HEK293 (cell line): ENCODE measurements at regions of chr1 and their contacts with region 1.

Region 1: GRCh38 chr1:112803906-112804762 is 89.0 kb upstream of the PPM1J start:
- H3K4me3 ChIP-seq: no peak overlapping the region
- H3K27ac ChIP-seq: no peak overlapping the region
- H3K4me1 ChIP-seq: no peaks in the 10 kb centered on the region
- CTCF ChIP-seq: peak; percentile 92

Region 2: DNA sequence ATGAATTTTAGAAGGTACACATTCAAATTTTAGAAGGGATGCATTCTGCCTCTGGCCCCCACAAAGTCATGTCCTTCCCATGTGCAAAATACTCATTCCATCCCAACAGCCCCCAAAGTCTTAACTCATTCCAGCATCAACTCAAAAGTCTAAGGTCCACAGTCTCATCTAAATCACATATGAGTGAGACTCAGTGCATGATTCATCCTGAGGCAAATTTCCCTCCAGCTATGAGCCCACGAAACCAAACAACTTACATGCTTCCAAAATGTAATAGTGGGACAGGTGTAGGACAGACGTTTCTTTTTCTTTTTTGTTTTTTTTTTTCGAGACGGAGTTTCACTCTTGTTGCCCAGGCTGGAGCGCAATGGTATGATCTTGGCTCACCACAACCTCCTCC is 307.8 kb before region 1 on chr1:
- CTCF ChIA-PET with region 1: no interaction called
- POLR2A ChIA-PET with region 1: no interaction called
- H3K4me3 ChIP-seq: no peak overlapping the region
- H3K27ac ChIP-seq: no peak overlapping the region
- H3K4me1 ChIP-seq: no peaks in the 10 kb centered on the region
- CTCF ChIP-seq: no peak

Region 3: GRCh38 chr1:112563341-112563740 is 240.8 kb before region 1 on chr1:
- CTCF ChIA-PET with region 1: no interaction called
- POLR2A ChIA-PET with region 1: no interaction called
- H3K4me3 ChIP-seq: no peak overlapping the region
- H3K27ac ChIP-seq: no peak overlapping the region
- H3K4me1 ChIP-seq: no peaks in the 10 kb centered on the region; the same call in 1 of the 2 replicates
- CTCF ChIP-seq: no peak

Region 4: DNA sequence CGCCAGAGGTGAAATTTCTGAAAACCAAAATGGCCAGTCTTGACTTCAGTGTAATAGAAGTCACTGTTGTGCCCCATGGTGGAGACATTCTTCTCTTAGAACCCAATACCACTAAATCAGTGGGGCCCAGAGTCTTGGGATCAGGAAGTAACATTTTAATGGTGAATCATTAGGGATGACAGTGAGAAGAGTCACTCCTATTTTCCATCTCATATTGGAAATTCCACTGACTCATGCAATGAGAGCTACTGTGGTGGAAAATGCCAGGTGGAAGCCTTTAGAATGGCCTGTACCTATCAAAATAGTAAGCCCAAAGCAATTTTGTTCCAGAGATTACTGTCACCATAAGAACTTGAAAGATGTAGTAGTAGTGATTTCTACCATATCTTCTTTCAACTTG is 68.4 kb before region 1 on chr1:
- CTCF ChIA-PET with region 1: interaction called, 14 read pairs
- POLR2A ChIA-PET with region 1: no interaction called
- H3K4me3 ChIP-seq: no peak overlapping the region
- H3K27ac ChIP-seq: no peak overlapping the region
- H3K4me1 ChIP-seq: no peaks in the 10 kb centered on the region
- CTCF ChIP-seq: no peak

Region 5: GRCh38 chr1:112818990-112819689 is 15.0 kb after region 1 on chr1:
- CTCF ChIA-PET with region 1: interaction called, 27 read pairs
- POLR2A ChIA-PET with region 1: no interaction called
- H3K4me3 ChIP-seq: no peak overlapping the region
- H3K27ac ChIP-seq: peak overlapping the region; percentile 53; the same call in 1 of the 2 replicates
- H3K4me1 ChIP-seq: 0 out of 2 replicates have a peak, but pooled peaks cover 4% of the 10 kb centered on the region
- CTCF ChIP-seq: no peak

Region 6: DNA sequence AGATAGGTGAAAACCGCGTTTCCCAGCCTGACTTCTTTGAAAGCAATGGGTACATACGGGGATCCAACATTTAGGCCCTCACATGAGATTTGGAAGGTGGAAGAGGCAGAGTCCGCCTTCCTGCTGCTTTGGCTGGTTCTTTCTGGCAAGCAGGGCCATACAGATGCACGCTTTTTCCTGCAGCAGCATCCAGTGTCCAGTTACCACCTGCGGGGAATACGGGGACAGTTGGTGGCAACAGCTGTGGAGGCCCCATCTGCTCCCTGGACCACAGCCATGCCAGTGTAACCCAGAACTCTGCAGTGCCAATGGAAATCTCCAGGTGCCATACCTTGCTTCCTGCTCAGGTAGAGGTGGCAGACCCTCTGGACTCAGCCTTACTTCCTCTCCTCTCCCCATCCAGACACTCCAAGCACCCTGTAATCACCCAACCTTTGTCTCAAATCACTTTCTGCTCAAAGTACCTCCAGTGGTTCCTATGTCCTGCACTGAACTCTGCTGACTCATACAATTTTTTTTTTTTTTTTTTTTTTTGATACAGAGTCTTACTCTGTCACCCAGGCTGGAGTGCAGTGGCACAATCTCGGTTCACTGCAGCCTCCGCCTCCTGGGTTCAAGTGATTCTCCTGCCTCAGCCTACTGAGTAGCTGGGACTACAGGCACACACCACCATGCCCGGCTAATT is 83.6 kb after region 1 on chr1:
- CTCF ChIA-PET with region 1: no interaction called
- POLR2A ChIA-PET with region 1: no interaction called
- H3K4me3 ChIP-seq: no peak overlapping the region
- H3K27ac ChIP-seq: no peak overlapping the region
- H3K4me1 ChIP-seq: no peaks in the 10 kb centered on the region
- CTCF ChIP-seq: no peak

Region 7: DNA sequence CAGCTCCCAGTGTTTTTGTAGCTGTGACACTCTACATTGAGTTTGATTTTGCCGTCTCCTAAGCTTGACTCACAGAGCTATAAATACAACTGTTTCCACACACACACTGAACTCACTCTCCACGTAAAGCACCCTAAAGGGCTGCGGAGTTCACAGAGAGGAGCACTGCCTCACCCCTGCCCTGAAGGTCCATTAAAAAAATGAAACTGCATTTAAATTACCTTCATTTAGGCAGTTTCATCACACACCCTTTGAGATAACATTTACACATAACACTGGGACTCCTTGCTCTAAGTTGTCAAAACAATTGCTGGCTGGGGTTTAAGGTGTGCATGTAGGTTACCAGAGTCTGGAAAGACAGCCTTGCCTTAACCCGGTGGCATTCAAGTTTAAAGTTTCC is 449.1 kb after region 1 on chr1:
- CTCF ChIA-PET with region 1: no interaction called
- POLR2A ChIA-PET with region 1: no interaction called
- H3K4me3 ChIP-seq: no peak overlapping the region
- H3K27ac ChIP-seq: no peak overlapping the region
- H3K4me1 ChIP-seq: peaks cover 3% of the 10 kb centered on the region; the same call in 1 of the 2 replicates
- CTCF ChIP-seq: no peak